AG04450 (cell line): ENCODE measurements at regions of chr16 and their contacts with region 1.

Region 1: DNA sequence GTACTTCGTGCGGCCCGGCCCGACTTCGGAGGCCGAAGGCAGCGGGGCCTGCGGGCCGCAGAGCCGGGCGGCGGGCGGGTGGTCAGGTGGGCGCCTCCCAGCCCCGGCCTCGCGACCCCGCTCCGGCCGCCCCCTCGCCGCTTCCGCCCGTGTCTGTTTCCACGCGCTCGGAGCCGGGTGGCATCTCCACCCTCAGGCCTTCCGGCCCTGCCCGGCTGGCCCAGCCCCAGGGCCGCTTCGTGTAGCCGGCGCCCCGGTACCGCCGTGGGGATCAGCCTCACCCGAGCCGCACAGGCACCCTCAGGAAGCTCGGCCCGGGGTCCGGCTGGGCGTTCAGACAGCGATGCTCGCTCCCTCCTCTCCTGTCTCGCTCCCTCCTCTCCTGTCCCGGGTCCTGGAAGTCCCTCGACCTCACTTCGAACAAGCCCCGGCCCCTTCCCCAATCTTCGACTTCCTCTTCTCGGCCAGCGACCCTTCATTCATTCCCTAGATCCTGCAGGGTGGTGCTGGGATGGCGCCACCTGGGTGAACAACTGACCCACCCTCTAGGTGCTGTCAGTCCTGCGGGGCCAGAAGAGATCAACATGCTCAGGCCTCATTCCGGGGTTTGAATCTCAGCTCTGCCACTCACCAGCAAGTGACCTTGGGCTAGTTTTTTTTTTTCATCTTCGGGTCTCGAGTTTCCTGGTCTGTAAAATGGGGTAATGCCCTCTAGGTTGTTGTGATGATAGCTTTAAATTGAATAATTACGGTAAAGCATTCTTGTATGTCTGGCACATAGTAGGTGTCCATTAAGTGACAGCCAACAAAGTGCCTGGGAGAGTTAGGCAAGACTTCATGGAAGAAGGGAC is 608 bp downstream of the VPS4A start:
- DNase-seq: no peak
- H3K4me3 ChIP-seq: peak overlapping the region; percentile 86
- H3K27ac ChIP-seq: peak overlapping the region; percentile 65
- H3K27me3 ChIP-seq: no peaks in the 10 kb centered on the region
- CTCF ChIP-seq: 0 out of 2 replicates have a peak, but pooled peaks have one; percentile 15

Region 2: GRCh38 chr16:69326172-69326873 is 14.6 kb after region 1 on chr16:
- CTCF ChIA-PET with region 1: interaction called, 10 read pairs
- POLR2A ChIA-PET with region 1: interaction called, 4 read pairs
- DNase-seq: no peak
- H3K4me3 ChIP-seq: no peak overlapping the region
- H3K27ac ChIP-seq: no peak overlapping the region
- H3K27me3 ChIP-seq: no peaks in the 10 kb centered on the region
- CTCF ChIP-seq: no peak